Right cardiac atrium (tissue), 5 donors: ENCODE measurements at regions of chr2 and their contacts with region 1.

Region 1: GRCh38 chr2:47767880-47768609 is 14.9 kb upstream of the MSH6 start:
- DNase-seq: peak; percentile 58 to 88 (median 84)
- ATAC-seq: peak; percentile 84 to 87
- H3K4me3 ChIP-seq: no peak overlapping the region
- H3K27ac ChIP-seq: no peak overlapping the region
- H3K4me1 ChIP-seq: no peaks in the 10 kb centered on the region
- H3K27me3 ChIP-seq: no peaks in the 10 kb centered on the region

Region 2: GRCh38 chr2:47344890-47345589 is 423.0 kb before region 1 on chr2:
- intact Hi-C with region 1: loop called in 1 of 4 experiments (anchors 5 kb)
- DNase-seq: peak; percentile 62 to 83 (median 78)
- ATAC-seq: peak; percentile 94 to 98
- H3K4me3 ChIP-seq: peak overlapping the region; percentile 50
- H3K27ac ChIP-seq: peak overlapping the region; percentile 79
- H3K4me1 ChIP-seq: peaks cover 4% of the 10 kb centered on the region
- H3K27me3 ChIP-seq: no peaks in the 10 kb centered on the region

Region 3: GRCh38 chr2:47437287-47437686 is 330.8 kb before region 1 on chr2:
- intact Hi-C with region 1: loop called (anchors 2 to 5 kb)
- DNase-seq: no peak
- ATAC-seq: peak in 1 of 2 donors; percentile 42
- H3K4me3 ChIP-seq: no peak overlapping the region
- H3K27ac ChIP-seq: no peak overlapping the region
- H3K4me1 ChIP-seq: no peaks in the 10 kb centered on the region
- H3K27me3 ChIP-seq: no peaks in the 10 kb centered on the region